AG04449 (cell line): ENCODE measurements at regions of chr17 and their contacts with region 1.

Region 1: GRCh38 chr17:40531051-40531991 is 29.9 kb upstream of the TNS4 start:
- DNase-seq: no peak
- H3K4me3 ChIP-seq: no peak overlapping the region
- CTCF ChIP-seq: no peak

Region 2: GRCh38 chr17:40303009-40303657 is 228.2 kb before region 1 on chr17:
- CTCF ChIA-PET with region 1: interaction called, 15 read pairs
- POLR2A ChIA-PET with region 1: no interaction called
- DNase-seq: no peak
- H3K4me3 ChIP-seq: no peak overlapping the region
- CTCF ChIP-seq: peak; percentile 58

Region 3: DNA sequence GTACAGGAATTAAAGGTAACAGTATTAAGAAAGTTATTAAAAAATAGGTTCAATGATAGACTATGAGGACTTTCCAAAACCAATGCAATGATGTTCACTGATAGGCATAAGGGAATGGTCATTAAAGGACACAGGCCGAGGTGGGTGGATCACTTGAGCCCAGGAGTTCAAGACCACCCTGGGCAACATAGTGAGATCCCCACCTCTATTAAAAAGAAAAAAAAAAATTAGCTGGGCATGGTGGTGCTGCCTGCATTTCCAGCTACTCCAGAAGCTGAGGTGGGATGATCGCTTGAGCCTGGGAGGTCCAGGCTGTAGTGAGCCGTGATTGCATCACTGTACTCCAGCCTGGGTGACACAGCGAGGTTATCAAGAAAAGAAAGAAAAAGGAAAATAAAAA is 119.5 kb before region 1 on chr17:
- CTCF ChIA-PET with region 1: interaction called, 133 read pairs
- POLR2A ChIA-PET with region 1: no interaction called
- DNase-seq: no peak
- H3K4me3 ChIP-seq: no peak overlapping the region
- CTCF ChIP-seq: no peak

Region 4: DNA sequence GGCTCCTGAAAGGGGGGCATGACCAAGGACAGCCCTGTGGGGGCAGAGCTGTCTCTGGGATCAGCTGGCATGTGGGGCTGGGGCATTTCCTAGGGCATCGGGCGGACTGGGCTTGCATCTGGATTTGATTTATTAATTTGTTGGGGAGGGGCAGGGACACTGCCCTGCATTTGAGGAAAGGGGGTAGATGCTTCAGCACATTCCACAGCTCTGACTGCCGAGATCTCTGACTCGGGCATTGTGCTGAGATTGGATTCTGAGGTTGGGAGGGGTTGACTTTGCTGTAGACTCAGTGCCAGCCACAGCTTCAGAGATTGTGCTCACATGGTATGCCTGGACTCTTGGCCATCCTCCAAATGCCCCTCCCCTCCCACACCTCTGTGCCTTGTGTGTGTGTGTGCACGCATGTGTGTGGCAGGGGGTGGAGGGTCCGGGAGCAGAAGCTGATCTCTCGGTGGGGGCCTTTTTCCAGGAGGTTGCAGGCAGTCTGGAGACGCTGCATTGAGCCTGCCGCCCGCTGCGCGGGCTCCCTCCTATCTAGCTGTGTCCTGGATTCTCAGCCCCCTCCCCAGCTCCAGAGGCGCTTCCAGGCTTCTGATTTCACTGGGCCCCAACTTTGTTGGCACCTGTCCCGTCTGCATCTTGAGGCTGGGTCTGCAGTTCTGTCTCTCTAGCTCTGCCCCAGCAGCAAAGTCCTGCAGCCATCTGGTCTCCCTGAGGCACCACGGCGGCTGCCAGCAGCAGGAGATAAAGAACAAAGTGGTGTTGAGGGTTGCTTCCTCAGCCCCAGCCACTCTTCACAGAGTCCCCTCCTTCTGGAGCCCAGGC is 73.1 kb before region 1 on chr17:
- CTCF ChIA-PET with region 1: interaction called, 27 read pairs
- POLR2A ChIA-PET with region 1: interaction called, 3 read pairs
- DNase-seq: peak; percentile 63
- H3K4me3 ChIP-seq: no peak overlapping the region
- CTCF ChIP-seq: no peak

Region 5: DNA sequence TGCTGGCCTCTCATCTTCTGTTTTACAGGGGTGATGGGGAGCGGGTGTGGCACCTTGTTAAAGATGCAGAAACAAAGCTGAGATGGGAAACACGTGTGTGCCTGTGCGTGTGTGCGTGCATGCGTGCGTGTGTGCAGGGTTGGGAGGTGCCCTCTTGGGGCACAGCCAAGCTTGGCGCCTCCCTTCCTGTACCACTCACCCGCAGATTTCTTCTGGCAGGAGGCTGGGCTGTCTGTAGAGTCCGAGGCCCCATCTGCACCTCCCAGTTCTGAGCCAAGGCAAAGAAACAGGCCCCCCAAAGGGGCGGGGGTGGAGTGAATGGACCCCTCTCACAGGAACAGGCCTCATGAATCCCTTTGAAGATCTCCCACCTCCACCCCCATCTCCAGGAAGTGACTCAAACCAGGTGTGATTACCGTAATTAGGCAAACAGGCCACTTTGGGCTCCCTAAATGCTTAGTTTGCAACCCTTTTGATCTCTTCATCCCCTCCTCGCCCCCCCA is 50.8 kb before region 1 on chr17:
- CTCF ChIA-PET with region 1: interaction called, 140 read pairs
- POLR2A ChIA-PET with region 1: interaction called, 6 read pairs
- DNase-seq: no peak
- H3K4me3 ChIP-seq: no peak overlapping the region
- CTCF ChIP-seq: no peak

Region 6: GRCh38 chr17:40516581-40517285 is 14.6 kb before region 1 on chr17:
- CTCF ChIA-PET with region 1: interaction called, 33 read pairs
- POLR2A ChIA-PET with region 1: interaction called, 3 read pairs
- DNase-seq: no peak
- H3K4me3 ChIP-seq: no peak overlapping the region
- CTCF ChIP-seq: no peak

Region 7: GRCh38 chr17:40664582-40665333 is 133.4 kb after region 1 on chr17 and contains the start of gene KRT222:
- CTCF ChIA-PET with region 1: no interaction called
- POLR2A ChIA-PET with region 1: no interaction called
- DNase-seq: no peak
- H3K4me3 ChIP-seq: no peak within 1 kb of the TSS
- CTCF ChIP-seq: no peak

Region 8: GRCh38 chr17:40678902-40679522 is 147.7 kb after region 1 on chr17:
- CTCF ChIA-PET with region 1: no interaction called
- POLR2A ChIA-PET with region 1: no interaction called
- DNase-seq: no peak
- H3K4me3 ChIP-seq: no peak overlapping the region
- CTCF ChIP-seq: no peak